PC-9 (cell line): ENCODE measurements at regions of chr2 and their contacts with region 1.

Region 1: DNA sequence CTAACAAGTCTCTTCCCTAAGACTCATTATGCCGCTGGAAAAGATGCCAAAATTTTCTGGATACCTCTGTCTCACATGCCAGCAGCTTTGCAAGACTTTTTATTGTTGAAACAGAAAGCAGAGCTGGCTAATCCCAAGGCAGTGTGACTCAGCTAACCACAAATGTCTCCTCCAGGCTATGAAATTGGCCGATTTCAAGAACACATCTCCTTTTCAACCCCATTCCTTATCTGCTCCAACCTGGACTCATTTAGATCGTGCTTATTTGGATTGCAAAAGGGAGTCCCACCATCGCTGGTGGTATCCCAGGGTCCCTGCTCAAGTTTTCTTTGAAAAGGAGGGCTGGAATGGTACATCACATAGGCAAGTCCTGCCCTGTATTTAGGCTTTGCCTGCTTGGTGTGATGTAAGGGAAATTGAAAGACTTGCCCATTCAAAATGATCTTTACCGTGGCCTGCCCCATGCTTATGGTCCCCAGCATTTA is 26.3 kb downstream of the DHRS9 start:
- DNase-seq: peak; percentile 50 to 92
- H3K4me3 ChIP-seq: peak overlapping the region; percentile 37; the same call in 1 of the 2 replicates
- H3K27ac ChIP-seq: peak overlapping the region; percentile 55
- H3K4me1 ChIP-seq: peaks cover 55% of the 10 kb centered on the region
- H3K27me3 ChIP-seq: no peaks in the 10 kb centered on the region
- CTCF ChIP-seq: no peak

Region 2: DNA sequence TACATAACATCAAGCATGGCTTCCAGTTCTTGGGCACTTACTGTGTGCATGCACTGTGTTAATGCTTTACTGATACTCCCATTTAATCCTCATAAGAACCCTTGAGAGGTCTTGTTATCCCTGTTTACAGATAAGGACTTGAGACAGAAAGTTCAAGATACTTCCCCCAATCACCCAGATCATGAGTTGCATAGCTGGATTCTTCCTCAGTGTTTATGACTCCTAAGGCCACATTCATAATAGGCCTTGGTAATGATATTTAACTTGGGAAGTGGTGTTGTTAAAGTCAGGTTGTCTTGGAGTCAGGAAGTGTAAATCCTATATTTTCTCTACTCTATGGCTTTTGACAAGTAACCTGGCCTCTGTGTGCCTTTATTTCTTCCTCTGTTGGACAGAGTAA is 270.5 kb before region 1 on chr2:
- CTCF ChIA-PET with region 1: no interaction called
- POLR2A ChIA-PET with region 1: no interaction called
- intact Hi-C with region 1: no loop called
- DNase-seq: no peak
- H3K4me3 ChIP-seq: no peak overlapping the region
- H3K27ac ChIP-seq: no peak overlapping the region
- H3K4me1 ChIP-seq: no peaks in the 10 kb centered on the region
- H3K27me3 ChIP-seq: no peaks in the 10 kb centered on the region
- CTCF ChIP-seq: no peak

Region 3: DNA sequence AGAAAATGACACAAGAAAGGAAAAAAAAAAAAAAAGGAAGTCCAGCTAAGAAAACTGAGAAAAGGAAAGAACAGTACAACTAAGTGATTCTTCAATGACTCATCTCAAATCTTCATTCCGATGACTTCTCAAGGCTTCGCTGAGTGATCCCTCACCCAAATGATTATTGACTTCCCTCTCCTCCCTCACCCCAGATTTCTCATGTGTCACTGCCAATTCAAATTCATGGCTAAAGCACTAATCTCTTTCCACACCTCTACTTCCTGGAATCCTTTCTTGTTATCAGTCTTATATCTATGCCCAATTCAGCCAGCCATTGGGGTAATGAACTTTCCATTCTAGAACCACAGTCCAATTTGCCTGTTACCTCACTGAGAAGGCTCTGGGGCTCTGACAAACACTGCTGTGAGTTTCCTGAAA is 57.3 kb before region 1 on chr2:
- CTCF ChIA-PET with region 1: no interaction called
- POLR2A ChIA-PET with region 1: no interaction called
- intact Hi-C with region 1: loop called (anchors 5 kb)
- DNase-seq: peak; percentile 41 to 92
- H3K4me3 ChIP-seq: no peak overlapping the region
- H3K27ac ChIP-seq: peak overlapping the region; percentile 87
- H3K4me1 ChIP-seq: peaks cover 36% of the 10 kb centered on the region
- H3K27me3 ChIP-seq: no peaks in the 10 kb centered on the region
- CTCF ChIP-seq: no peak

Region 4: GRCh38 chr2:169080250-169081069 is 15.2 kb before region 1 on chr2:
- CTCF ChIA-PET with region 1: no interaction called
- POLR2A ChIA-PET with region 1: no interaction called
- intact Hi-C with region 1: no loop called
- DNase-seq: no peak
- H3K4me3 ChIP-seq: no peak overlapping the region
- H3K27ac ChIP-seq: no peak overlapping the region
- H3K4me1 ChIP-seq: no peaks in the 10 kb centered on the region
- H3K27me3 ChIP-seq: no peaks in the 10 kb centered on the region
- CTCF ChIP-seq: no peak

Region 5: GRCh38 chr2:169109502-169110409 is 14.1 kb after region 1 on chr2:
- CTCF ChIA-PET with region 1: no interaction called
- POLR2A ChIA-PET with region 1: no interaction called
- intact Hi-C with region 1: no loop called
- DNase-seq: peak; percentile 54 to 55
- H3K4me3 ChIP-seq: no peak overlapping the region
- H3K27ac ChIP-seq: no peak overlapping the region
- H3K4me1 ChIP-seq: peaks cover 9% of the 10 kb centered on the region; the same call in 1 of the 2 replicates
- H3K27me3 ChIP-seq: no peaks in the 10 kb centered on the region
- CTCF ChIP-seq: peak; percentile 85

Region 6: DNA sequence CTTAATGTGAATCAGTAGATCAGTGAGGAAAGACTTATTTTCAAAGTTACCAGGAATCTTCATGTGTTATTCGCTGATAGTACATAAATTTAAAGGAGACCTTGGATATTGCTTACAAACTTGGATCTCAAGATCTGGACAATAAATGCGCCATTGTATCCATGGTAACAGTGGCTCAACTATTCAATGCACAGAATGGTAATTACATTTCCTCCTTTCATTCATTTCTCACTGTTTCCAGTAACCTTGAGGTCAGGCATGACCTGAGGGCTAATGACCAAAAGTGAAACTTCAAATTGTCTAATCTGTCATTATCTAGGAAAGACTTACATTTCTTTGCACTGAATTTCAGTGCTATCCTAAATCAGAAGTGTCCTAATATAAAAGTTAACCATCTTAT is 258.6 kb after region 1 on chr2:
- CTCF ChIA-PET with region 1: no interaction called
- POLR2A ChIA-PET with region 1: no interaction called
- intact Hi-C with region 1: no loop called
- DNase-seq: no peak
- H3K4me3 ChIP-seq: no peak overlapping the region
- H3K27ac ChIP-seq: no peak overlapping the region
- H3K4me1 ChIP-seq: no peaks in the 10 kb centered on the region
- H3K27me3 ChIP-seq: no peaks in the 10 kb centered on the region
- CTCF ChIP-seq: no peak